Psoas muscle (tissue), 8 donors: ENCODE measurements at regions of chr2 and their contacts with region 1.

Region 1: GRCh38 chr2:98444436-98445176 is at the start of gene INPP4A:
- DNase-seq: peak; percentile 76 to 88
- ATAC-seq: peak; percentile 93 to 96 (median 96)
- H3K4me3 ChIP-seq: peak within 1 kb of the TSS; percentile 88
- H3K27ac ChIP-seq: peak within 1 kb of the TSS; percentile 65
- H3K4me1 ChIP-seq: peaks cover 11% of the 10 kb centered on the region
- H3K27me3 ChIP-seq: no peaks in the 10 kb centered on the region
- CTCF ChIP-seq: peak; percentile 26
- total RNA-seq, gene INPP4A: 9.8 to 19.7 (median 13.1) TPM

Region 2: DNA sequence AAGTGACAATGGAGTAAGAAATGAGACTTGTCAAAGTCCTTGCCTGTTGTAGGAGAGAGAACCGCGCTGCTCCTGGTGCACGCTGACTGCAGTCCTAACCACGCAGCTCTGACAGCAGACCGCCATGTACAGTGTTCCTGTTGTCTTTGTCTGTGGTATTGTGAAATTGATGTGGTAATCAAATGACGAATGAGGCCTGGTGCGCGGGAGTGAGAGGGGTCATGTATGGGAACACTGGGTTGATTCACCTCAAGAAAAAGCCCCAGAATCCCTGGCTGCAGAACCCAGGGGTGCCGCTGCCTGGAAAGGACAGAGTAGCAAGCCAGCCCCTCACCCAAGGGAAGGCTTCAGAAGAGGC is 64.1 kb after region 1 on chr2:
- intact Hi-C with region 1: loop called in 1 of 2 experiments (anchors 5 kb)
- DNase-seq: peak; percentile 43 to 76
- ATAC-seq: peak in 3 of 4 donors; percentile 61 to 73 (median 65)
- H3K4me3 ChIP-seq: no peak overlapping the region
- H3K27ac ChIP-seq: no peak overlapping the region
- H3K4me1 ChIP-seq: peaks cover 19% of the 10 kb centered on the region
- H3K27me3 ChIP-seq: no peaks in the 10 kb centered on the region
- CTCF ChIP-seq: no peak

Region 3: DNA sequence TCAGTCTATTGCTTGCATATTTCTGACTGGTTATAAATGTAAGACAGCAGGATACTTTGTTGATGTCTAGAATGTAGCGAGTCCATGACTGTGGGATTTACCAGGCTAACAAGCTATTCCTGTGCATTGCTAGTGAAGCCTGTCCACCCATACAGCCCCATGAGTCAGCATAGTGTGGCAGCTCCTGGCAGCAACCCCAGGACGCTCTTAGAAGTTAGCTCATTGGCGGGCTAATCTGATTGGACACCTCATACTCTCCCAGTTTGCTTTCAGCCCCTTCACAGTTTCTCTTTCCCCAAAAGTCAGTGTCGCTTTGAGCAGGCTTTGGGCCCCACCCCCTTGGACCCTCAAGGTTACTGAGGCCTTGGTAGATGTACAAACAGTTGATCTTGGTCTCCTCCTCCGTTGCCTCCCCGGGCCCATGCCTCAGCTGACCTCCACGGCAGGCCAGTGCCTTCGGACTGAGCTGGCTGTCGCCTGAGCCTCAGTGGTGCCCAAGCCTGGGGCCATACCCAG is 115.7 kb after region 1 on chr2:
- intact Hi-C with region 1: no loop called
- DNase-seq: no peak
- ATAC-seq: peak; percentile 84 to 90 (median 87)
- H3K4me3 ChIP-seq: no peak overlapping the region
- H3K27ac ChIP-seq: peak overlapping the region; percentile 60
- H3K4me1 ChIP-seq: peaks cover 8% of the 10 kb centered on the region
- H3K27me3 ChIP-seq: no peaks in the 10 kb centered on the region
- CTCF ChIP-seq: no peak